Activated naive CD8-positive, alpha-beta T cell treated with anti-CD3 and anti-CD28 coated beads, Interleukin-2, amount 10 ng/mL, durations not matched to agents 7 days and 5 days (primary cell): ENCODE measurements at regions of chr20 and their contacts with region 1.

Region 1: GRCh38 chr20:44475694-44476560 is at the start of gene TTPAL:
- DNase-seq: peak; percentile 93
- ATAC-seq: peak; percentile 98
- H3K4me3 Mint-ChIP-seq: peak within 1 kb of the TSS; percentile 94
- H3K27ac Mint-ChIP-seq: peak within 1 kb of the TSS; percentile 98
- H3K4me1 Mint-ChIP-seq: peaks cover 24% of the 10 kb centered on the region
- H3K27me3 Mint-ChIP-seq: peaks cover 3% of the 10 kb centered on the region
- total RNA-seq, gene TTPAL: 16.4 to 16.9 TPM

Region 2: DNA sequence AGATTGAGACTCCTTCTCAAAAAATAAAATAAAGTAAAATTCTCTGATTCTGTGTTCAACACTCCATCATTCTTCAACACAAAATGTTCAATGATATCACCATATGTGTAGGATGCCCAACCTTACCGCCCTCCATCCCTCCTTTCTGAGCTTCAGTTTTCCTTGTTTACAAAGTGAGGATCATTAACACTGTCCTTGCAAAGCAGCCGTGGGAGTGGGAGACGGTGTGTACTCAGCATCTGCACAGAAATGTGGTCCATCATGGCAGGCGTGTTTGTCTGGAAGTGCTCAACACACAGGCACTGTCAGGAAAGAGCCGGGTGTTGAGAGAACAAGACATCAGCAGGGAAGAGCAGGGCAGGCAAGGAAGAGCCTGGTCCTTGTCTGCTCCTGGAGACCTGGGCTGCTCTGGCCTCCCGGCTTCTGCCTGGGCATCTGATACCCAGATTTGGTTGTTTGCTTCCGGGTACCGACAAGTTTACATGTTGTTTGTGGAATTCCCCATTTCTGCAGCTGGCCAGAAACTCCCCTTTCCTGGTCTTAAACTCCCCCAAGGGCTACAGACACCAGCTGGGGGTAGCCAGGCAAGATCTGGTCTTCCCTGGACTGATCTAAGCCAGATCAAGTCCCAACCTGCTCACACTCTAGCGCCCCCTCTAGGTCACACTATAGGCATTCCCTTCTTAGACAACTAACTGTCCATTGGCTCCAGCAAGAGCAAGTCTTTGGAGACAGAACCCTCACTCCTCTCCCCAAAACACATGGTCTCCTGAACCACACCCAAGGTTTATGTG is 27.0 kb before region 1 on chr20:
- POLR2A ChIA-PET with region 1: no interaction called
- DNase-seq: no peak
- ATAC-seq: no peak
- H3K4me3 Mint-ChIP-seq: no peak overlapping the region
- H3K27ac Mint-ChIP-seq: no peak overlapping the region
- H3K4me1 Mint-ChIP-seq: no peaks in the 10 kb centered on the region
- H3K27me3 Mint-ChIP-seq: peaks cover 4% of the 10 kb centered on the region

Region 3: GRCh38 chr20:44521484-44522481 is 45.9 kb after region 1 on chr20 and contains the start of gene SERINC3:
- POLR2A ChIA-PET with region 1: interaction called, 14 read pairs
- DNase-seq: peak; percentile 98
- ATAC-seq: peak; percentile 99
- H3K4me3 Mint-ChIP-seq: peak within 1 kb of the TSS; percentile 84
- H3K27ac Mint-ChIP-seq: peak within 1 kb of the TSS; percentile 88
- H3K4me1 Mint-ChIP-seq: peaks cover 24% of the 10 kb centered on the region
- H3K27me3 Mint-ChIP-seq: no peaks in the 10 kb centered on the region
- total RNA-seq, gene SERINC3: 71.5 to 72.7 TPM

Region 4: GRCh38 chr20:44552950-44553908 is 77.3 kb after region 1 on chr20:
- POLR2A ChIA-PET with region 1: no interaction called
- DNase-seq: no peak
- ATAC-seq: no peak
- H3K4me3 Mint-ChIP-seq: no peak overlapping the region
- H3K27ac Mint-ChIP-seq: no peak overlapping the region
- H3K4me1 Mint-ChIP-seq: peaks cover 4% of the 10 kb centered on the region
- H3K27me3 Mint-ChIP-seq: peaks cover under 1% of the 10 kb centered on the region